Activated B cell treated with CpG ODN at 0.5 μM for 24 hours (primary cell): ENCODE measurements at regions of chr22 and their contacts with region 1.

Region 1: DNA sequence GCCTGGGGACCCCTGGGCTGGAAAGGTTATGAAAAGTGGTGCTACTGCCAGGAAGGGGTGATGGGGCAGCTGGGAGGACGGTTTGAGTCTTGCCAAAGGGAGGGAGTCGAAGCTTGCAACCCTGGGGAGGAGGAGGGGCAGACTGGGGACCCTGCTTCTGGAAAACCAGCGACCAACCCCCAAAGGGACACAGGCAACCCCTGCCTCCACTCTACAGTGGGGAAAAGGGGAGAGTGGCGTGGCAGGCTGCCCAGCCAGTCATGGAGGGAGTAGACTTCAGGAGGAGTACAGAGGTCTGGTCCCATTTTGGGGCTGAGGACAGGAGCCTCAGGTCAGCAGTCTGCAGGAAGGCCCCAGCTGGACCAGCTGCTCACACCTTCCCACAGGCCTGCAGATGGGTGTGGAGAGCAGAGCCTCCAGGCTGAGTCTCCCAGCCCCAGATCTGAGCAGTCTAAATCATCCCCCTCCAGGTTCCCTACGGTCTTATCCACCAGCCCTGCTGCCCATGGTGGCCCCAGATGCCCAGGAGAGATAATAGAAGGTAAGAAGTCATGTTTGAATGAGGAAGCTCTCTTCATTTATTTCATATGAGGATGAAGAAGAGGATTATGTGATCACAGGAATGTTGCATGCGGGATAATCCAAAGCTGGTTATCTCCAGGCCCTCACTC is 3.3 kb downstream of the DDT start:
- DNase-seq: no peak
- ATAC-seq: no peak
- H3K4me3 Mint-ChIP-seq: no peak overlapping the region
- H3K27ac Mint-ChIP-seq: no peak overlapping the region
- H3K4me1 Mint-ChIP-seq: peaks cover 19% of the 10 kb centered on the region
- H3K27me3 Mint-ChIP-seq: no peaks in the 10 kb centered on the region
- CTCF ChIP-seq: no peak

Region 2: GRCh38 chr22:23938328-23939016 is 32.5 kb before region 1 on chr22:
- CTCF ChIA-PET with region 1: no interaction called
- POLR2A ChIA-PET with region 1: no interaction called
- intact Hi-C with region 1: loop called (anchors 5 kb)
- DNase-seq: no peak
- ATAC-seq: no peak
- H3K4me3 Mint-ChIP-seq: no peak overlapping the region
- H3K27ac Mint-ChIP-seq: no peak overlapping the region
- H3K4me1 Mint-ChIP-seq: no peaks in the 10 kb centered on the region
- H3K27me3 Mint-ChIP-seq: peaks cover 2% of the 10 kb centered on the region
- CTCF ChIP-seq: no peak

Region 3: DNA sequence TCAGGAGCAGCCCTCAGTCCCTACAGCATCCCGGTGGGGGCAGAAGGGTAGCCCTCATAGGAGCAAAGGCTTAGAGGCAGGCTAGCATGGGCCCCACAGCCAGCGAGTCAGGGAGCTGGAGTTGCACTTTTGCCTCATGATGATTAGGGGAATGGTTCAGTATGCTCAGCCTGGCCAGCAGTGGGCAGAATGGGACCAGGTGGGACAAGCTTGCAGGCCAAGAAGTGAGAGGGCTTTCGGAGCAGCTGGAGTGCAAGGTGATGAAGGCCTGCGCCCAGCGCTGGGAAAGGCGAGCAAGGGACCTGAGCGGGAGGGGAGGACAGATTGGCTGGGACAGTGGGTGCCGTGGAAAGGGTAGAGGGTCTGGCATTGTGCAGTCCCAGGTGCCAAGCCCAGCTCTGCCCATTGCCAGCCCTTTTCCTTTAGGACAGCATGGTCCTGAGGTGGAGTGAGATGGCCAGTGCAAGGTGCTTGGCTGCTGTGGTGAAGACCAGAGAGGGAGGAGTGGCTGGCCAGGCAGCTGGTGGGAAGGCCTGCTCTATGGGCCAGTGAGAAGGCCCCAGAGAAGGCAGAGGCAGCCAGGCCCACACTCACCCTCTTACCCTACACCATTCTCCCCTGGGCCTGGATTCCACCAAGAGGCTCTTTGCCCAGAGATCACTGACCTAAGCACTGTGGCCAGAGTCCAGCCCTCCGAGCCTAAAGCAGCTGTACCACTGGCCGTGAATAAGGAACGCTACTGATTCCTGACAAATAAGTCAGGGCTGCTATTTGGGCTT is 162.4 kb after region 1 on chr22:
- CTCF ChIA-PET with region 1: no interaction called
- POLR2A ChIA-PET with region 1: interaction called, 10 read pairs
- intact Hi-C with region 1: no loop called
- DNase-seq: no peak
- ATAC-seq: no peak
- H3K4me3 Mint-ChIP-seq: no peak overlapping the region
- H3K27ac Mint-ChIP-seq: no peak overlapping the region
- H3K4me1 Mint-ChIP-seq: peaks cover 18% of the 10 kb centered on the region
- H3K27me3 Mint-ChIP-seq: no peaks in the 10 kb centered on the region
- CTCF ChIP-seq: no peak